ENCODE measurements at regions of chr11 and their contacts with region 1.

Region 1: DNA sequence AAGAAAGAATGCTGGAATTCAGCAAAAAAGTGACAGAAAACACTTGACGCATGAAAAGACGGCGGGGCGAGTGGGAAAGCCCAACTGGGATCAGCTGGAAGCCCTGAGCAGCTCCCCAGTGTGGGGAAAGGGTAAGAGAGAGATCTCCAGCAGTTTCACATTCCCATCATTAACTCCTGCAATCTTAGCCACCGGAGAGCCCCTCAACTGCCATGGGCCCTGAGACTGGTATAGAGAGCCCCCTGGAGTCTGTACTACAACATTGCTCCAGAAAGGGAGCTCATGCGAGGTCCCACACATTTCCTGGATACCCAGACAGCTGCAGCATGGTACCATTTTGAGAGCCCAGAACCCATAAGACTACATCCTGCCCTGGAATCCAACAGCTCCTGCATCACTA is 31.1 kb downstream of the MRGPRX4 start:
- DNase-seq: peak; percentile 26 to 59 (median 30)
- ATAC-seq: peak; percentile 93
- H3K4me3 ChIP-seq: no peak overlapping the region
- H3K27ac ChIP-seq: no peak overlapping the region
- H3K4me1 ChIP-seq: no peaks in the 10 kb centered on the region
- H3K27me3 ChIP-seq: peaks cover 0 to 22% of the 10 kb centered on the region in 2 experiments; a peak in 3 of 5 replicates
- CTCF ChIP-seq: peak; percentile 62 to 73 (median 69)
- EP300 ChIP-seq: no peak
- POLR2A ChIP-seq: no peak
- RAD21 ChIP-seq: peak in 1 of 2 experiments; percentile 61; a peak in 2 of 4 replicates

Region 2: GRCh38 chr11:17572359-17572690 is 631.4 kb before region 1 on chr11:
- CTCF ChIA-PET with region 1: no interaction called
- POLR2A ChIA-PET with region 1: no interaction called
- in situ Hi-C with region 1: no loop called
- intact Hi-C with region 1: no loop called
- DNase-seq: peak in 1 of 4 experiments; percentile 14
- ATAC-seq: peak; percentile 43
- H3K4me3 ChIP-seq: no peak overlapping the region
- H3K27ac ChIP-seq: no peak overlapping the region
- H3K4me1 ChIP-seq: peaks cover 0 to 11% of the 10 kb centered on the region in 2 experiments; a peak in 2 of 5 replicates
- H3K27me3 ChIP-seq: peaks cover 10 to 27% of the 10 kb centered on the region in 2 experiments; a peak in 4 of 5 replicates
- CTCF ChIP-seq: no peak
- EP300 ChIP-seq: no peak
- POLR2A ChIP-seq: no peak
- RAD21 ChIP-seq: no peak

Region 3: GRCh38 chr11:17991783-17992433 is 211.8 kb before region 1 on chr11:
- CTCF ChIA-PET with region 1: interaction called, 5 read pairs
- POLR2A ChIA-PET with region 1: no interaction called
- in situ Hi-C with region 1: no loop called
- intact Hi-C with region 1: loop called (anchors 2 kb)
- DNase-seq: peak; percentile 56 to 66 (median 62)
- ATAC-seq: peak; percentile 88
- H3K4me3 ChIP-seq: no peak overlapping the region
- H3K27ac ChIP-seq: no peak overlapping the region
- H3K4me1 ChIP-seq: no peaks in the 10 kb centered on the region
- H3K27me3 ChIP-seq: no peaks in the 10 kb centered on the region
- CTCF ChIP-seq: peak; percentile 64 to 88 (median 75)
- EP300 ChIP-seq: no peak
- POLR2A ChIP-seq: no peak
- RAD21 ChIP-seq: peak; percentile 60 to 77

Region 4: DNA sequence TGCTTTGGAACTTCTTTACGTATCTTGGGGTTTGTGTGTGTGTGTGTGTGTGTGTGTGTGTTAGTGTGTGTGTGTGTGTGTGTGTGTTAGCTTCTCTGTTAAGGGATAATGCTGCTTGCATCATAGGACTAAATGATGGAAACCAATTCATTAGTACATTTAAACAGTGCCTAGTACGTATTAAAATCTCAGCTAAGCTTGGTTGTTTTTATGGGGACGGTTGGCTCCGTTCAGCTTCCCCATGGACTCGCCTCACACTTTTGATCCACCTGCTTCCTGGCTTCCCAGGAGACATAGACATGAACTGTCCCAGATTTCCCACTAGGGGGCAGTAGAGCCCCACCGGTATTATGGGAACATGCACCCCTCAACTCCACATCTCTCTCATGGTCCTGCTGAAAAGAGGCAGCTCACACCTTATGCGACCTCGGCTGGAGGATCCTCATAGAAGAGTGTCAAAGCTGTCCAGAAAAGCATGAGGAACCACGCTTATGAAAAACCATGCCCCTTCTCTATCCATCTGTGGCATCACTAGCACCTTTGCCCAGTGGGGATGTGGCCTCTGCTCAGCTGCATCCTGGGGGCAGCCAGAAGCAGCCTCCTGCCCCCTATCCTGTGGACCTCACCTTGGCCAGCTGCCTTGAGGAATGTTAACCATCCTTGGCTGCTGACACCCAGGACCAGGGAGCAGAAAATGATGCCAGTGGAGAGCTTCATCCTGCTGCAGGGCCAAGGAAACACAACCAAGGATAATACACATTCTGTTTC is 88.2 kb before region 1 on chr11:
- CTCF ChIA-PET with region 1: interaction called, 5 read pairs
- POLR2A ChIA-PET with region 1: interaction called, 8 read pairs
- in situ Hi-C with region 1: no loop called
- intact Hi-C with region 1: loop called (anchors 1 kb)
- DNase-seq: peak; percentile 77 to 80 (median 77)
- ATAC-seq: peak; percentile 98
- H3K4me3 ChIP-seq: no peak overlapping the region
- H3K27ac ChIP-seq: no peak overlapping the region
- H3K4me1 ChIP-seq: no peaks in the 10 kb centered on the region
- H3K27me3 ChIP-seq: peaks cover 11 to 17% of the 10 kb centered on the region in 2 experiments; a peak in 4 of 5 replicates
- CTCF ChIP-seq: peak; percentile 83 to 87 (median 84)
- EP300 ChIP-seq: no peak
- POLR2A ChIP-seq: no peak
- RAD21 ChIP-seq: peak; percentile 63 to 83

Region 5: GRCh38 chr11:18171377-18172000 is 32.2 kb before region 1 on chr11:
- CTCF ChIA-PET with region 1: interaction called, 3 read pairs
- POLR2A ChIA-PET with region 1: no interaction called
- in situ Hi-C with region 1: no loop called
- intact Hi-C with region 1: loop called (anchors 1 kb)
- DNase-seq: peak; percentile 32 to 42 (median 38)
- ATAC-seq: peak; percentile 90
- H3K4me3 ChIP-seq: no peak overlapping the region
- H3K27ac ChIP-seq: no peak overlapping the region
- H3K4me1 ChIP-seq: no peaks in the 10 kb centered on the region; a peak in 1 of 5 replicates
- H3K27me3 ChIP-seq: peaks cover 6 to 13% of the 10 kb centered on the region in 2 experiments; a peak in 3 of 5 replicates
- CTCF ChIP-seq: peak; percentile 60 to 70 (median 64)
- EP300 ChIP-seq: no peak
- POLR2A ChIP-seq: no peak
- RAD21 ChIP-seq: peak; percentile 61 to 75

Measured in K562 (cell line).